Activated B cell treated with CpG ODN at 0.5 μM for 24 hours (primary cell): ENCODE measurements at regions of chr12 and their contacts with region 1.

Region 1: DNA sequence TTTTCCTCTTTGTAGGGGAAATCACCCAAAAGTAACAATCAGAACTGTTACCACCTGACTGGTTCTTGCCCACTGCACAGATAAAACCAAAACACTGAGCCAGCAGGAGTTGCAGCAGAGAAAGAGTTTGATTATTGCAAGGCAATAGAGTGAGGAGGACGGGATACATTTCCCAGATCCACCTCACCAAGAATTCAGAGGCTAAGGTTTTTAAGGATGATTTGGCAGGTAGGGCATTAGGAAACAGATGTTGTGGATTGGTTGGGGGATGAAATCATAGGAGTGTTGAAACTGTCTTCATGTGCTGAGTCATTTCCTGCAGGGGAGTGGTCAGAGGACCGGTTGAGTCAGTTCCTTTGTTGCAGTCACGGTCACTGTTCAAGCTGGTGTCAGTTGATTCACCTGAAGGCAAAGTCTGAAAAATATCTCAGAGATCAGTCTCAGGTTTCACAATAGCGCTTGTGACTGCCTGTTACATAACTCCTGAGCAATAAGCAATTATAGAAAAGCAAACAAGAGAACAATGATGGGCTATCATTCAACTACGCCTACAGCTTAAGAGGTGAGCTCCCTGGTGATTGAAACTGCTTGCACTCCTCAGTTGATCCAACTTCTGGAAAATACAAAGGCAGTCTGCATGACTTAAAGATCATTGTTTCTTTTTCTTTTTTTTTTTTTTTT is 20.3 kb upstream of the AMN1 start:
- DNase-seq: no peak
- ATAC-seq: peak; percentile 74
- H3K4me3 Mint-ChIP-seq: peak overlapping the region; percentile 68
- H3K27ac Mint-ChIP-seq: peak overlapping the region; percentile 97
- H3K4me1 Mint-ChIP-seq: peaks cover 78% of the 10 kb centered on the region
- H3K27me3 Mint-ChIP-seq: no peaks in the 10 kb centered on the region
- CTCF ChIP-seq: no peak

Region 2: GRCh38 chr12:31325877-31326631 is 423.1 kb before region 1 on chr12 and contains the start of gene SINHCAF:
- CTCF ChIA-PET with region 1: no interaction called
- POLR2A ChIA-PET with region 1: no interaction called
- intact Hi-C with region 1: loop called (anchors 5 kb)
- DNase-seq: peak; percentile 99
- ATAC-seq: peak; percentile 62
- H3K4me3 Mint-ChIP-seq: peak within 1 kb of the TSS; percentile 96
- H3K27ac Mint-ChIP-seq: peak within 1 kb of the TSS; percentile 97
- H3K4me1 Mint-ChIP-seq: peaks cover 34% of the 10 kb centered on the region
- H3K27me3 Mint-ChIP-seq: no peaks in the 10 kb centered on the region
- CTCF ChIP-seq: no peak
- total RNA-seq, gene SINHCAF: 153 and 157 TPM in 2 replicates

Region 3: DNA sequence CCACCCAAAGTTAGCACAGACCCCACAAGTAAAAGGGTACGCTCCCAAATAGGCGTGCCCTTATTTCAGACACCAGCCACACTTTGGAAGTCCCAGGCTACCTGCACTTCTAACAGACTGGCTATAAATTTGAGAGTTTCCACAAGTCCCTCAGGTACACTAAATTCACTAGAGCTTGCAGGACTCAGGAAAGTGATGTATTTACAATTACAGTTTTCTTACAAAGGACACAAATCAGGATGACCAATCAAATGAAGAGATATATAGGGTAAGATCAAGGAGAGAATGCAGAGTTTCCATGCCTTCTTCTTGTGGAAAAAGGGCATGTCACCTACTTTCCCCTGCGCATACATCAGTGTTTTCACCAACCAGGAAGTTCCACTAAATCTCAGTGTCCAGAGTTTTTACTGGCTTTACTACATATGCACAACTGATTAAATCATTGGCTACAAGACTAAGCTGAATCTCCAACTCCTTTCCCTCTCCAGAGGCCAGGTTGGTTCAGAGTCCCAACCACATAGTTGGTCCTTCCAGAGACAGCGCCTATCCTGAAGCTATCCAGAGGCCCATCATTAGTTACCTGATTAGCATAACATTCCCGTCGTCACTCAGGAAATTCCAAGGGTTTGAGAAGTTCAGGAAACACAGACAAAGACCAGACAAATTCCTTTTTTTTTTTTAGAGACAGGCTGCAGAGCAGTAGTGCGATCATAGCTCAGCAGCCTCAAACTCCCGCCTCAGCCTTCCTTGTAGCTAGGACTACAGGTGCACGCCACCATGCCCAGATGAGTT is 242.5 kb before region 1 on chr12:
- CTCF ChIA-PET with region 1: no interaction called
- POLR2A ChIA-PET with region 1: no interaction called
- intact Hi-C with region 1: no loop called
- DNase-seq: no peak
- ATAC-seq: no peak
- H3K4me3 Mint-ChIP-seq: no peak overlapping the region
- H3K27ac Mint-ChIP-seq: no peak overlapping the region
- H3K4me1 Mint-ChIP-seq: peaks cover 55% of the 10 kb centered on the region
- H3K27me3 Mint-ChIP-seq: no peaks in the 10 kb centered on the region
- CTCF ChIP-seq: no peak

Region 4: DNA sequence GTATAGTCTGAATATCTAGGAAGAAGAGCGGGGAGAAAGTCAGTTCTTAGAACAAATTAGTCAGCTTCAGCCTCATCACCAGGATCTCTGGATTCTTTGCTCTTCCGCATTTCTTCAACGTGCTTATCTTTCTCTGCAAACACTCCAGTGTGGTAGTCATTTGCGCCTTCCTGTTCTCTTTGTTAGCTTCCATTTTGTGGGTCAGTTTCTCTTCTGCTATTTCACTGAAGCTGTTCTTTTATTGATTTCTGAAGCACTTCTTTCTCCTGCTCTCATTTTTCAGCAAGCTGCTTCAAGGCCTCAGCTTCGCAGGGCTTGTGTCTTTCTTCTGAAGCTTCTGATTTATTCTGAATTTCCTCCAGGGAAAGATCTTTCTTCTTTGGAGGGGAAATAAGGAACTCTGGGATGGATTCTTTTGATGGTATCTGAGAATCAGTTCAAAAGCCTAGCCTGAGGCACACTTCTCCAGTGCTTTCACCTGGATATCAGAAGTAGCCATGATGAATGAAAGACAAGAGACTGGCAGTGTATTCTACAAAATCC is 33.8 kb before region 1 on chr12:
- CTCF ChIA-PET with region 1: no interaction called
- POLR2A ChIA-PET with region 1: interaction called, 31 read pairs
- intact Hi-C with region 1: loop called (anchors 1 kb)
- DNase-seq: no peak
- ATAC-seq: peak; percentile 93
- H3K4me3 Mint-ChIP-seq: peak overlapping the region; percentile 32
- H3K27ac Mint-ChIP-seq: peak overlapping the region; percentile 85
- H3K4me1 Mint-ChIP-seq: peaks cover 58% of the 10 kb centered on the region
- H3K27me3 Mint-ChIP-seq: no peaks in the 10 kb centered on the region
- CTCF ChIP-seq: no peak

Region 5: DNA sequence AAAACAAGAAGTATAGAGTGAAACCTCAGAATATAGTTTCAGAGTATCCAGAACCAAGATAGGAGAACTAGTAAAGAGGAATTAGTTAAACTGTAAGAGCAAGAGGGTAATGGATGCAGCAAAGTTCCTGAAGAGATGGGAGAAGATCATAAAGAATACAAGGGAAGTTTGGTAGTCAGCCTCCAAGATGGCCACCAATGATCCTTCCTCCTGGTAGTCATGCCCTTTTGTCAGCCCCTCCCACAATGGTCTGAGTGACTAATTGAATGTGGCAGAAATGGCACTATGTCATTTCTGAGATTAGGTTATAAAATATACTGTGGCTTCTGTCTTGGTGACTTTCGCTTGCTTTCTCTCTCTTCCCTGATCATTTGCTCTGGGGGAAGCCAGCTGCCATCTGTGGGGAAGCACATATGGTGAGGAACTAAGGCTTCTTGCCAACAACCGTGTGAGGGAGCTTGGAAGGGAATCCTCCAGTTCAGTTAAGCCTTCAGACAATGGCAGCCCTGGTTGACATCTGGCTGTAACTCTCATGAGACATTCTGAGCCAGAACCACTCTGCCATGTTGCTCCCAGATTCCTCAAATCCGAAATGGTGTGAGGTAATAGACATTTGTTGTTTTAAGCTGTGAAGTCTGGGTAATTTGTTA is 35.0 kb after region 1 on chr12:
- CTCF ChIA-PET with region 1: no interaction called
- POLR2A ChIA-PET with region 1: interaction called, 4 read pairs
- intact Hi-C with region 1: loop called (anchors 5 kb)
- DNase-seq: no peak
- ATAC-seq: no peak
- H3K4me3 Mint-ChIP-seq: no peak overlapping the region
- H3K27ac Mint-ChIP-seq: no peak overlapping the region
- H3K4me1 Mint-ChIP-seq: peaks cover 14% of the 10 kb centered on the region
- H3K27me3 Mint-ChIP-seq: no peaks in the 10 kb centered on the region
- CTCF ChIP-seq: no peak

Region 6: GRCh38 chr12:31820832-31821231 is 71.7 kb after region 1 on chr12:
- CTCF ChIA-PET with region 1: no interaction called
- POLR2A ChIA-PET with region 1: interaction called, 10 read pairs
- intact Hi-C with region 1: no loop called
- DNase-seq: no peak
- ATAC-seq: no peak
- H3K4me3 Mint-ChIP-seq: no peak overlapping the region
- H3K27ac Mint-ChIP-seq: no peak overlapping the region
- H3K4me1 Mint-ChIP-seq: peaks cover 22% of the 10 kb centered on the region
- H3K27me3 Mint-ChIP-seq: no peaks in the 10 kb centered on the region
- CTCF ChIP-seq: no peak

Region 7: DNA sequence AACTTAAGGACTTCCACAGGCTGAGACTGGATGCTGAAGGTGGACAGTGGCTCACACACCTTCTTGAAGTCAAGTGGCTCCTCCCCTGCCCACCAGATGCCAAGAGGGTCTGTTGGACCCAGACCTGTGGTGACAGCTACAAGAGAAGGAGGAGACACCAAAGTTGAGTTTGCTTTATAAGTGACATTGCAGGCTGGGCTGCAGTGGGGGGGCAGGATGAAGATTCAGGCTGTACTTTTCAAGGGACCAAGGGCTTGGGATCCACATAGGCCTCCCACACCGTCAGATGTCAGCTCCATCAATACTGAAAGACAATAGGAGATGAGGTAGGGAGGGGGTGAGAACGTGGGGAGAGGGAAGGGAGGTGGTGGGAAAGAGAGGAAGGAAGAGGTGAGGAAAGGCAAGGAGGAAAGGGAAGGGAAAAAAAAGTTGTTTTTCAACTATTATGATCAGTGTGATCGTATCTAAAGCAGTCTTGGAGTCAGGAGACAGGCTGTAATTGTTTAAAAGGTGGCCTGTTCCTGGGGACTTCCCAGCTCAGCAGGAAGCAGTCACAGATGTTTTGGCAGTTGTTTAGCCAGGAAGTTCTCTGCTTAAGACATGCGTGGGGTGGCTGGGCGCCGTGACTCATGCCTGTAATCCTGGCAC is 125.9 kb after region 1 on chr12:
- CTCF ChIA-PET with region 1: no interaction called
- POLR2A ChIA-PET with region 1: interaction called, 14 read pairs
- intact Hi-C with region 1: loop called (anchors 1 kb)
- DNase-seq: peak; percentile 45
- ATAC-seq: peak; percentile 85
- H3K4me3 Mint-ChIP-seq: peak overlapping the region; percentile 77
- H3K27ac Mint-ChIP-seq: peak overlapping the region; percentile 100
- H3K4me1 Mint-ChIP-seq: peaks cover 77% of the 10 kb centered on the region
- H3K27me3 Mint-ChIP-seq: no peaks in the 10 kb centered on the region
- CTCF ChIP-seq: no peak

Region 8: DNA sequence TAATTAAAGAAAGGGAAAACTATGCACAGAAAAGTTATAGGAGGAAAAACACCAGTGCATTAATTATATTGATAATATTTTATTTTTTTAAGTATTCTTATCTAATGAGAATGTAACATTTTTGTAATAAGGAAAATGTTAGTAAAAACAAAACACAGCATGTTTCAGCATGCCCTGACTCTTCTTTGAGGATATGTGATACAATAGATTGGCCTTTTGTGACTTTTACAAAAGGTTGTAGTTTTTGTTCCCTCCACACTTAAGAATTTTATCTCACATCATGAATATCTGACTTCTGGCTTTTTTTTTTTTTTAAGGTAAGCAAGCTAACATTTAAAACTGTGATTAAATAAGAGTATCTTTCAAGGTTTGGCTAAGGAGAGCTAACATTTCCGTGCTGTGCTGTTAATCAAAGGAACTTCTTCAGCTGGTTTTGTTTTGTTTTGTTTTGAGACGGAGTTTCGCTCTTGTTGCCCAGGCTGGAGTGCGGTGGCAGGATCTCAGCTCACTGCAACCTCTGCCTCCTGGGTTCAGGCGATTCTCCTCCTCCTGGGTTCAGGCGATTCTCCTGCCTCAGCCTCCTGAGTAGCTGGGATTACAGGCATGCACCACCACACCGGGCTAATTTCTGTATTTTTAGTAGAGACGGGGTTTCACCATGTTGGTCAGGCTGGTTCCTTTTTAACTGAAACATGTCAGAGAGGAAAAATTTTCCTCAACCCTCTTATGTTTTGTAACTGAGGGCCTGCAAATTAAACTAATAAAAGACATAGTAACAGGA is 179.3 kb after region 1 on chr12:
- CTCF ChIA-PET with region 1: no interaction called
- POLR2A ChIA-PET with region 1: no interaction called
- intact Hi-C with region 1: no loop called
- DNase-seq: no peak
- ATAC-seq: peak; percentile 49
- H3K4me3 Mint-ChIP-seq: peak overlapping the region; percentile 83
- H3K27ac Mint-ChIP-seq: peak overlapping the region; percentile 92
- H3K4me1 Mint-ChIP-seq: peaks cover 36% of the 10 kb centered on the region
- H3K27me3 Mint-ChIP-seq: no peaks in the 10 kb centered on the region
- CTCF ChIP-seq: no peak

Region 9: DNA sequence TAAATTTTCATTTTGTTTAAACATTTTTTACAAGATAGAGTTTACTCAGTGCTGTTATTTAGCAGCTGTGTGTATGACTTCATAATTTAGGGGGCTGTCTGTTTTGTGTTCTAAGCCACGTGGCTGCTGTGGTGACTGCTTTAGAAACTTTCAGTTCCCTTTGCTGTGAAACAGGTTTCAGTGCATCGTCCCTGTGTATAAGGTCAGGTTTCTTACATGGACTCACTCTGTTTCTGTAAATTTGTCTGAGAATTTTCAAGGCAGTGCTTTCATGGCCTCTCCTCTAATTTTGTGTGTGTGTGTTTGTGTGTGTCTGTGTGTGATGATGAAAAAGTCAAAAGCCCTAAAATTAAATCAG is 389.9 kb after region 1 on chr12:
- CTCF ChIA-PET with region 1: no interaction called
- POLR2A ChIA-PET with region 1: interaction called, 4 read pairs
- intact Hi-C with region 1: loop called (anchors 2 kb)
- DNase-seq: peak; percentile 27
- ATAC-seq: peak; percentile 83
- H3K4me3 Mint-ChIP-seq: peak overlapping the region; percentile 79
- H3K27ac Mint-ChIP-seq: peak overlapping the region; percentile 96
- H3K4me1 Mint-ChIP-seq: peaks cover 74% of the 10 kb centered on the region
- H3K27me3 Mint-ChIP-seq: no peaks in the 10 kb centered on the region
- CTCF ChIP-seq: no peak